GM18951 (cell line): ENCODE measurements at regions of chr10 and their contacts with region 1.

Region 1: DNA sequence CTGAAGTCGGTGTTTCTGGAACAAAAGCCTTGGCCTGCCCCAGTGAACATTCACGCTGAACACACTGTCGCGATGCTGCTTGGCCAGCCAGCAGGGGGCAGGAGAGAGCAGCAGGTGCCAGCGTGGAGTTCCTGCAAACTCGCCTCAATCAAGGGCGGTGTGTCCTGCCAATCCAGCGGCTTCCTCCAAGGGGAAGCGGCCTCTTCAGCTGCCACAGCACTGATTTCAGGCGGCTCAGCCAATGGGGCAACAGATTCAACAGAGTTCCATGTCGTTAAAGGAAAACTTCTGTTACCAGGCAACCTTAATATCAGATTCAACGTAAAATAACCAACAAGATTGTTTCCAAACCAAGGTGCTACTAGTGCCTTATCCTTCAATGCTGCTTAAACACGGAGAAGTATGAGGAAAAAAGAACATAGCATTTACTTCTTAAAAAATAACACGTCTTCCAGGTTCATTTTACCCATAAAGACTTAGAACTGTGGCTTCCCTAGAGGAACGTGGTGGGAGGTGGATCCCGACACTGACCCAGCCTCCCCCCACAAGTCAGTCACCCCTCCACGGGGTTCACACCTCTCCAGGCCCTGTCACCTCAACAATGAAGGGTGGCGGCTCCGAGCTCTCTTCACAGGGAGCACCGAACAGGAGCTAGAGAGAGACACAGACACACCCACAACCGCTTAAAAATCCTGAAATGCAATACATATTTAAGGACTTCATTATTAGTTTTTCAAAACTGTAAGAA is 178.2 kb downstream of the DIP2C start:
- POLR2A ChIP-seq: no peak

Region 2: GRCh38 chr10:784403-785088 is 273.3 kb after region 1 on chr10:
- in situ Hi-C with region 1: no loop called
- POLR2A ChIP-seq: no peak

Region 3: GRCh38 chr10:1074748-1075308 is 563.6 kb after region 1 on chr10:
- in situ Hi-C with region 1: loop called (anchors 25 kb)
- POLR2A ChIP-seq: no peak